ENCODE measurements at regions of chr12 and their contacts with region 1.

Region 1: GRCh38 chr12:1429980-1430379 is 164.4 kb downstream of the FBXL14 start:
- DNase-seq: no peak
- H3K4me3 ChIP-seq: no peak overlapping the region
- H3K27ac ChIP-seq: no peak overlapping the region
- H3K4me1 ChIP-seq: peaks cover 0 to 4% of the 10 kb centered on the region in 2 donors
- H3K27me3 ChIP-seq: no peaks in the 10 kb centered on the region
- CTCF ChIP-seq: no peak

Region 2: GRCh38 chr12:1474041-1474573 is 44.1 kb after region 1 on chr12:
- intact Hi-C with region 1: loop called (anchors 5 kb)
- DNase-seq: peak in 1 of 2 donors; percentile 77
- H3K4me3 ChIP-seq: peak overlapping the region in 1 of 2 donors; percentile 54
- H3K27ac ChIP-seq: peak overlapping the region; percentile 70 to 75
- H3K4me1 ChIP-seq: peaks cover 8 to 58% of the 10 kb centered on the region in 2 donors
- H3K27me3 ChIP-seq: no peaks in the 10 kb centered on the region
- CTCF ChIP-seq: no peak

Region 3: GRCh38 chr12:1496162-1496900 is 66.4 kb after region 1 on chr12:
- intact Hi-C with region 1: loop called (anchors 5 kb)
- DNase-seq: no peak
- H3K4me3 ChIP-seq: peak overlapping the region in 1 of 2 donors; percentile 52
- H3K27ac ChIP-seq: peak overlapping the region; percentile 56 to 65
- H3K4me1 ChIP-seq: peaks cover 0 to 2% of the 10 kb centered on the region in 2 donors
- H3K27me3 ChIP-seq: no peaks in the 10 kb centered on the region
- CTCF ChIP-seq: no peak